ENCODE measurements at regions of chr15 and their contacts with region 1.

Region 1: GRCh38 chr15:31435261-31435911 is 108.8 kb downstream of the KLF13 start:
- DNase-seq: peak; percentile 65 to 81 (median 72)
- H3K4me3 ChIP-seq: peak overlapping the region in 37 of 59 donors; percentile 0 to 46 (median 27)
- H3K27ac ChIP-seq: peak overlapping the region in 39 of 59 donors; percentile 1 to 82 (median 41)
- H3K27me3 ChIP-seq: no peaks in the 10 kb centered on the region
- CTCF ChIP-seq: peak in 55 of 56 donors; percentile 34 to 95 (median 84)

Region 2: DNA sequence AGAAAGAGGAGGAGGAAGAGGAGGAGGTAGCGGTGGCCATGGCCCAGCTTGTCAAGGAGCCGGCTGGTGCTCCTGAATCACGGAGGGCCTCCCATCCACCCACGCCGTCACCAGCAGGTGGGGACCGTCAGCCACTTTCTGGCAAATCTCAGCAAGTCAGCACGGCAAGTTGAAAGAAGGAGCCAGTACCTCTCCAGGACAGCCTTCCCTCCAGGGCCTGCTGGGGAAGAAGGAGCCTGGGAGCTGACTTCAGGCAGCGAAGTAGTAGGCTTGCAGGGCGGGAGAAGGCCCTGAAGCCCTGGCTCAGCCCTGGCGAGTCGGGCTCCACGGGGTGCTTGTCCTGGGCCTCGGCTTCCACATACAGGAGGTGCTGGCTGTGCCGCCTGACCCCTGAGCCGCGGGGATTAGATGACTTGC is 234.6 kb before region 1 on chr15:
- intact Hi-C with region 1: loop called in 1 of 2 experiments (anchors 5 kb)
- DNase-seq: peak; percentile 48 to 88 (median 71)
- H3K4me3 ChIP-seq: no peak overlapping the region
- H3K27ac ChIP-seq: no peak overlapping the region
- H3K27me3 ChIP-seq: no peaks in the 10 kb centered on the region
- CTCF ChIP-seq: peak in 54 of 56 donors; percentile 14 to 71 (median 47)

Region 3: GRCh38 chr15:31365655-31366127 is 69.7 kb before region 1 on chr15:
- intact Hi-C with region 1: loop called (anchors 2 kb)
- DNase-seq: peak; percentile 91 to 98 (median 96)
- H3K4me3 ChIP-seq: peak overlapping the region in 56 of 59 donors; percentile 0 to 58 (median 40)
- H3K27ac ChIP-seq: peak overlapping the region; percentile 76 to 100 (median 94)
- H3K27me3 ChIP-seq: no peaks in the 10 kb centered on the region
- CTCF ChIP-seq: peak in 51 of 56 donors; percentile 19 to 63 (median 42)

Region 4: DNA sequence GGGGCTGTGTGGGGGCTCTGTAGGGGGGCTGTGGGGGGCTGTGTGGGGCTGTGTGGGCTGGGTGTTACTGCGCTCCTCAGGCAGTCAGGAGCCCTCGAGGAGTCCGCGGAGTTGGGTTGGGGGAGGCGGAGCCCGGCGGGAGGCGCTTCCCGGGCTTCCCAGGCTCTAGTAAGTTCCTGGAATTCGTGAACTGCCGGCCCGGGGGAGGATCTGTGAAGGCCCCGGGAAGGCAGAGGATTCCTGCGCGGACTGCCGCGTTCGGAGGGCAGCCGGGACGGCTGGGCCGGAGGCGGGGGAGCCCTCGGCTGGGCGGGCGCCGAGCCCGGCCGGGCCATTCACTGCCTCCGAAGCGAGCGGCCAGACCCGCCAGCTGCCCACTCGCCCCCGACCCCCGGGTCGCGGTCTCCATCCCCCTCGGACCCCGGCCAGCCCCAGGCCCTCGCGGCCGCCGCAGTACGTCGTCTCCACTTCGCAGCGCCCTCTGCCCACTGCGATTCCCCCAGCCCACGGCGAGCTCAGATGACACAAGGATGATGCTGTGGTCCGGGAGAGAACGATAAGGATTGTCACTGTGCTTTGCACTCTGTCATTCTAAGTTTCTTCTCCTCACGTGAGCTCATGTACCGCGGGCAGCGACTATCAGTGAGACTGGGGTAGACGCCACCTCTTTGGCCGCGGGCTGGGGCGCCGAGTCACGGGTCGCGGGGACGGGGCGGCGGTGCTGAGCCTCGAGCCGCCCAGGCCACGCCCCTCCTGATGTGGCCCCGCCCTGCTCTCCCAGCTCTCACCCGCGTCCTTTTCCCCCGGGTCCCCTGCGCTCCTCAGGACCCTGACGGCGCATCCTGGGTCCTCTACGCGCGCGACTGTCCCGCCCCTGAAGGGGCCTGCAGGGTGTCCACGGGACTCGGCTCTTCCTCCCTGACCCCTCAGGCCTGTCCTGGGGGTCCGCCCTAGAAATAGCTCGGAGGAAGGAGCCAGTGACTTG is 43.4 kb before region 1 on chr15:
- intact Hi-C with region 1: loop called in 1 of 2 experiments (anchors 5 kb)
- DNase-seq: peak in 8 of 10 donors; percentile 48 to 83 (median 74)
- H3K4me3 ChIP-seq: peak overlapping the region; percentile 46 to 87 (median 71)
- H3K27ac ChIP-seq: peak overlapping the region in 57 of 59 donors; percentile 3 to 88 (median 71)
- H3K27me3 ChIP-seq: no peaks in the 10 kb centered on the region
- CTCF ChIP-seq: peak in 15 of 56 donors; percentile 6 to 46 (median 27)

Region 5: GRCh38 chr15:31457631-31458526 is 22.5 kb after region 1 on chr15:
- intact Hi-C with region 1: no loop called
- DNase-seq: no peak
- H3K4me3 ChIP-seq: no peak overlapping the region
- H3K27ac ChIP-seq: no peak overlapping the region
- H3K27me3 ChIP-seq: no peaks in the 10 kb centered on the region
- CTCF ChIP-seq: no peak

Measured in dorsolateral prefrontal cortex (tissue), 120 donors.